ENCODE measurements at regions of chr14 and their contacts with region 1.

Region 1: DNA sequence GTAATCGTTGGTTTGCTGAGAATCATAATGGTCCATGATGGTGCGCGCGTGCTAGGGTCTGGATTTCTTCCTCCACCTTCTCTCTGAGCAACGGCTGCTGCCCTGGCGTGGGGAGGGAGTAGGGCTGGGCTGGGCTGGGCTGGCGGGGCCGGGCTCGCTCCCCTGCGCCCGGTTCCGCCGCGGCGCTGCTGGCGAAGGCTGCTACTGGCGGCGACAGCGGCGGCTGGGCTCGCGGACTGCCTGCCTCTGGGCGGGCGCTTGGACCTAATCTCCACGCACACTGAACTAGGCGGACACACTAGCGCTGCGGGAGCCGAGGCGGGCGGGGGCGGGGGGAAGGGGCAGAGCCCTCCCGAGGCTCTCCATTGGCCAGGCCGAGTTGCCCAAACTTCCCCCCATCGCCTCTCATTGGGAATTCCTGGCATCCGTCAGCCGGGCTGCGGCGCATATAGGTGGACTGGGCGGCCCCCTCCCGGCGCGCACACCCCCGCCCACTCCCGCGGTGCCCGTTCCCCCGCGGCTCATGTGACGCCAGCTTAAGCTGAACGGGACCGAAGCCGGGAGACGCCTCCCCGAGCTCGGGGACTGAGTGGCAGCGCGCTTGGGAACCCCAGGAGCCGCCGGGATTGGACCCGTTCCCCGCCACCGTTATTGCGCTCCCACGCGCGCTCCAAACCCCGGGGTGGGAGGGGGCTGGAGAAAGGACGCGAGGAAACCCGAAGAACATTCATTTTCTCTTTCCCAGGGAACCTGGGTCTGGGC is at the start of gene ACTN1:
- DNase-seq: peak; percentile 99
- H3K4me3 ChIP-seq: peak within 1 kb of the TSS; percentile 85 to 100 (median 97)
- H3K27ac ChIP-seq: peak within 1 kb of the TSS; percentile 98 to 100 (median 100)
- H3K4me1 ChIP-seq: peaks cover 0 to 70% (median 62%) of the 10 kb centered on the region in 4 donors
- H3K27me3 ChIP-seq: no peaks in the 10 kb centered on the region
- CTCF ChIP-seq: no peak
- EP300 ChIP-seq: peak in 1 of 4 donors; percentile 56
- POLR2A ChIP-seq: peak; percentile 87 to 88
- total RNA-seq, gene ACTN1: 372 to 1,069 (median 688) TPM

Region 2: GRCh38 chr14:68939893-68940613 is 39.1 kb before region 1 on chr14:
- intact Hi-C with region 1: loop called (anchors 2 kb)
- DNase-seq: peak; percentile 92
- H3K4me3 ChIP-seq: peak overlapping the region in 1 of 4 donors; percentile 16
- H3K27ac ChIP-seq: peak overlapping the region; percentile 98 to 100 (median 100)
- H3K4me1 ChIP-seq: peaks cover 0 to 100% (median 99%) of the 10 kb centered on the region in 4 donors
- H3K27me3 ChIP-seq: no peaks in the 10 kb centered on the region
- CTCF ChIP-seq: no peak
- EP300 ChIP-seq: peak in 1 of 4 donors; percentile 73
- POLR2A ChIP-seq: peak in 1 of 2 donors; percentile 22

Region 3: GRCh38 chr14:69043596-69044260 is 64.5 kb after region 1 on chr14:
- intact Hi-C with region 1: loop called (anchors 5 kb)
- DNase-seq: peak; percentile 79
- H3K4me3 ChIP-seq: no peak overlapping the region
- H3K27ac ChIP-seq: peak overlapping the region; percentile 72 to 89 (median 74)
- H3K4me1 ChIP-seq: peaks cover 0 to 63% (median 59%) of the 10 kb centered on the region in 4 donors
- H3K27me3 ChIP-seq: no peaks in the 10 kb centered on the region
- CTCF ChIP-seq: no peak
- EP300 ChIP-seq: peak in 1 of 4 donors; percentile 51
- POLR2A ChIP-seq: no peak

Region 4: DNA sequence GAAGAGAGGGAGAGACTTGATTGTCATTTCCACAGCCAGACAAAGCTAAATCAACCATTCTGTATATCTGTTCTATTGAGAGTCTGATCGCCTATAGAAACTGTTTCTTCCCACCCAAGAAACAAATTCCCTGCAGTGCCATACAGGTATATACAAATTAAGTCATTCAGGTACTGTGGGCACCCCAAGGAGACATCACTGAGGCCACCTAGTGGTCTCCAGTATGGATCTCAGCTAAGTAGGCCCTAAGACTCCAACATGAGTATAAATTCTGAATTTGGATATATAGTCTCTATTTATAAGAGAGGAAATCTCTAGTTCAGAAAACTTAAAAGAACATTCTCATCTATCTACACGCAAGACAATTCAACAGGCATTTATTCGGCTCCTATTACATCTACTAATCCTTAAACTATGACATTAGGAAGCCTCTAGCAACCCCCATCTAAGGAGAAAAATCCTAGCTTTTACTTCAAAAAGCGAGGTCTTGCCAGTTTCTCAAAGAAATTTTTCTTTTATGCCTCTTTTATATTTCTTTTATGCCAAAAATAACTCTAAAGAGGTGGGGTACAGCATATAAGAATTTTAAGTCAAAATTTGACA is 111.1 kb after region 1 on chr14:
- intact Hi-C with region 1: loop called (anchors 2 kb)
- DNase-seq: no peak
- H3K4me3 ChIP-seq: no peak overlapping the region
- H3K27ac ChIP-seq: peak overlapping the region; percentile 83 to 88 (median 86)
- H3K4me1 ChIP-seq: peaks cover 0 to 85% (median 69%) of the 10 kb centered on the region in 4 donors
- H3K27me3 ChIP-seq: no peaks in the 10 kb centered on the region
- CTCF ChIP-seq: peak in 3 of 4 experiments; percentile 61 to 64 (median 62)
- EP300 ChIP-seq: no peak
- POLR2A ChIP-seq: no peak

Measured in sigmoid colon (tissue), 7 donors.